ENCODE measurements at regions of chr11 and their contacts with region 1.

Region 1: DNA sequence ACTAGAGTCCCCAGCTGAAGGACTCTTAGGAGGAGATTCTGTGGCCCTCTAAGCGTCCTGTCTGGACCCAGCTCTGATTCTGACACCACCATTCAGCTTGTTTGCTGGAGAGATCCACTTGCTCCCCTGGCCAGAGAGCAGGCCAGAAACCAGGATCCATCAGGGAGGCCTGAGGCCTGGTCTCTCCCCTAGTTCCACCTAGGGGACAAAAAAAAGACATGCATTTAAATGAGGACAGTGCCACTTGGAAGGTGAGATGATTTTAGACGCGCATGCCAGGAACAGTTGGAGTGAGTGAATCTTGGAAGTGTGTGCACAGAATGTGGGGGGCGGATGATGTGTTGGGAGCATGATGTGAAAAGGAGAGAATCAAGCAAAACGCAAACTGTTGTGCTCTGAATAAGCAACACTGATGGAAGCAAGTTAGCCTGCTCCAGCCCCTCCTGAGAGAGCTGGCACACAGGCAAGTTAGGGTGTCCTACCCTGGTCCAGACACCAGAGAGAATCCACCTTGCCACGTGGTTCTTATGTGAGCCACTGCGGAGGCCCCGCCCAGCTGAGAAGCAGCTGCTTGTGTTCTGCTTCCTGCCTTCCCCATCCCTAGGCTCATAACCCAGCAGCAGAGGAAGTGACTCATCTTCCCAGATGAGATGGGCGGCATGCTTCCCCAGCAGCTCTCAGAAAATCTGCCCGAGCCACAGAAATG is 8.0 kb upstream of the SLCO2B1 start:
- DNase-seq: peak; percentile 90
- ATAC-seq: peak; percentile 94
- H3K4me3 Mint-ChIP-seq: no peak overlapping the region
- H3K27ac Mint-ChIP-seq: peak overlapping the region; percentile 81
- H3K4me1 Mint-ChIP-seq: peaks cover 28% of the 10 kb centered on the region
- H3K27me3 Mint-ChIP-seq: no peaks in the 10 kb centered on the region
- CTCF ChIP-seq: peak; percentile 10

Region 2: DNA sequence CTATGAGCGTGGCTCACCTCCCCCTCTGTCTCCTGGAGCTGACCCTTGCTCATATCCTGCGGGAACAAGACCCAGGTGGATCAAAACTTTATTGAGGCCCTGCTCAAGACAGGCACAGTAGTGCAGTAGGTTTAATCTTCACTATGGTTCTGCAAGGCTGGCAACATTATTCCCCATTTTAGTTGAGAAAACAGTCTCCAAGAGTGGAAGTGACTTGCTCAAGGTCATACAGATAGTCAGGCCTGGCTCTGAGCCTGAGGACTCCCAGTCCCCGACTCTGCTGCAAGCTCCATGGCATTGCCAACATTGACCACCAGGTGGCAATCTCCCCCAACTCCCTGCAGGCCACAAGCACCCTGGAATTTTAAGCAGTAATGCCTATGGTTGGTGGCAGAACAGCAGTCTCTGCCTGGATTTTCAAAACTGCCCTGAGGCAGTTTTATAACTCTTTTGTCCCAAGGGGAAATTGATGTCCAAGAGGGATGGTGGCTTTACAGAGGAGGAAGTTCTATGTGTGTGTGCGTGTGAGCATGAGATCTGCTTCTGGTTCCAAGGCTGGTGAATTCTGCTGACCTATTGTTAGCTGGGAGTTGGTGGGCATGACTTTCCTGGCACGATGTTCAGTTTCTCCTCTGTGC is 120.0 kb before region 1 on chr11:
- CTCF ChIA-PET with region 1: interaction called, 41 read pairs
- POLR2A ChIA-PET with region 1: no interaction called
- intact Hi-C with region 1: no loop called
- DNase-seq: peak; percentile 82
- ATAC-seq: peak; percentile 94
- H3K4me3 Mint-ChIP-seq: no peak overlapping the region
- H3K27ac Mint-ChIP-seq: no peak overlapping the region
- H3K4me1 Mint-ChIP-seq: no peaks in the 10 kb centered on the region
- H3K27me3 Mint-ChIP-seq: no peaks in the 10 kb centered on the region
- CTCF ChIP-seq: peak; percentile 98

Region 3: DNA sequence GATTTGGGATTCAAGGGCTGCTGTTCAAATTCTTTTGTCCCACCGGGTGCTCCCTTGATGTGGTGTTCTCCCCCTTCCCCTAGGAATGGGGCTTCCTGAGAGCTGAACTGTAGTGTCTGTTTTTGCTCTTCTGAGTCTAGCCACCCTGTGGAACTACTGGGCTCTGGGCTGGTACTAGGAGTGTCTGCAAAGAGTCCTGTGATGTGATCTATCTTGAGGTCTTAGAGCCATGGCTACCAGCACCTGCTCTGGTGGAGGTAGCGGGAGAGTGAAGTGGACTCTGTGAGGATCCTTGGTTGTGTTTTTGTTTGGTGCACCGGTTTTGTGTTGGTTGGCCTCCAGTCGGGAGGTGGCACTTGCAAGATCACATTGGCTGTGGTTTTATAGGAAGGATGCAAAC is 92.4 kb before region 1 on chr11:
- CTCF ChIA-PET with region 1: no interaction called
- POLR2A ChIA-PET with region 1: no interaction called
- intact Hi-C with region 1: no loop called
- DNase-seq: no peak
- ATAC-seq: no peak
- H3K4me3 Mint-ChIP-seq: no peak overlapping the region
- H3K27ac Mint-ChIP-seq: no peak overlapping the region
- H3K4me1 Mint-ChIP-seq: no peaks in the 10 kb centered on the region
- H3K27me3 Mint-ChIP-seq: peaks cover 7% of the 10 kb centered on the region
- CTCF ChIP-seq: no peak

Region 4: GRCh38 chr11:75182669-75183068 is 39.8 kb after region 1 on chr11:
- CTCF ChIA-PET with region 1: interaction called, 25 read pairs
- POLR2A ChIA-PET with region 1: no interaction called
- intact Hi-C with region 1: no loop called
- DNase-seq: no peak
- ATAC-seq: no peak
- H3K4me3 Mint-ChIP-seq: no peak overlapping the region
- H3K27ac Mint-ChIP-seq: no peak overlapping the region
- H3K4me1 Mint-ChIP-seq: no peaks in the 10 kb centered on the region
- H3K27me3 Mint-ChIP-seq: peaks cover 2% of the 10 kb centered on the region
- CTCF ChIP-seq: no peak

Region 5: DNA sequence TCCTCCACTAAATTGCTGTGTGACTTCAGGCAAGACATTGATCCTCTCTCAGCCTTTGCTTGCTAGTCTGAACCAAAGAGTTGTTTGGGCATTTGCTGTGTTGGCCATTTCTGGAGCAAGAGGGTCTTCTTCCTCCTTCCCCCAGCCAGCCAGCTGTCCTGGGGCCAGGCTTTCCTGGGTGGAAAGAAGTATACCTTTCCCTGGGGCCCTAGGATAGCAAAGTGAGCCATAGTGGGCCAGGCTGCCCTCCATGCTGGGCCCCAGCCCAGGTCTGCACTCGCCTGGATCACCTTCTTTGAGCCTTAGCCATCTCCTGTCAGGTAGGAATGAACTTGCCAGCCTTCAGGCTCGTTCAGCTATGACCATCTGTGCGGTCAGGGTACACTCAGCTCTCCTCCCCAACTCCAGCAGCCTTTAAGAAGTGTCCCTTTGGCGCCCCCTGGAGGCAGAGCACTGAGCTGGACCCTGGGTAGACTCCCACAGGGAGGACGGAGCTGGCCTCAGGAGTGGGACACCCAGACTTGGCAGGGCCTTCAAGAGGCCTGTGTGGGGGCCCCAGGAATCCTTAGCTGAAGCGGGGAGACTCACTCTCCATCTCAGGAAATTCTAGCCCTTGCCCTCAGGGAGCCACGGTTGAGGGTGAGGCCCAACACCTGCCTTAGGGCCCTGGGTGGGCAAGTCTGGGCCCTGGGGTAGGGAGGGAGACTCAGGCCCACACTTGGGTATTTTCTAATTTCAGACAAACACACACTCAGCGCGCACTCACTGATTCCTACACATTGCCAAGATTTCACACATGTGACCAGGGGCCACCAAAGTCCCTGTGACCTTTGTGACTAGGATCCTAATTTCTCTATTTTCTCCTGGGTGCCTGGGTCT is 62.1 kb after region 1 on chr11:
- CTCF ChIA-PET with region 1: interaction called, 557 read pairs
- POLR2A ChIA-PET with region 1: interaction called, 3 read pairs
- intact Hi-C with region 1: loop called (anchors 2 kb)
- DNase-seq: peak; percentile 93
- ATAC-seq: peak; percentile 99
- H3K4me3 Mint-ChIP-seq: no peak overlapping the region
- H3K27ac Mint-ChIP-seq: no peak overlapping the region
- H3K4me1 Mint-ChIP-seq: no peaks in the 10 kb centered on the region
- H3K27me3 Mint-ChIP-seq: peaks cover 1% of the 10 kb centered on the region
- CTCF ChIP-seq: peak; percentile 87

Region 6: GRCh38 chr11:75248690-75249268 is 105.9 kb after region 1 on chr11:
- CTCF ChIA-PET with region 1: interaction called, 663 read pairs
- POLR2A ChIA-PET with region 1: interaction called, 4 read pairs
- intact Hi-C with region 1: loop called (anchors 2 kb)
- DNase-seq: peak; percentile 93
- ATAC-seq: peak; percentile 98
- H3K4me3 Mint-ChIP-seq: no peak overlapping the region
- H3K27ac Mint-ChIP-seq: no peak overlapping the region
- H3K4me1 Mint-ChIP-seq: no peaks in the 10 kb centered on the region
- H3K27me3 Mint-ChIP-seq: peaks cover 3% of the 10 kb centered on the region
- CTCF ChIP-seq: peak; percentile 100

Region 7: DNA sequence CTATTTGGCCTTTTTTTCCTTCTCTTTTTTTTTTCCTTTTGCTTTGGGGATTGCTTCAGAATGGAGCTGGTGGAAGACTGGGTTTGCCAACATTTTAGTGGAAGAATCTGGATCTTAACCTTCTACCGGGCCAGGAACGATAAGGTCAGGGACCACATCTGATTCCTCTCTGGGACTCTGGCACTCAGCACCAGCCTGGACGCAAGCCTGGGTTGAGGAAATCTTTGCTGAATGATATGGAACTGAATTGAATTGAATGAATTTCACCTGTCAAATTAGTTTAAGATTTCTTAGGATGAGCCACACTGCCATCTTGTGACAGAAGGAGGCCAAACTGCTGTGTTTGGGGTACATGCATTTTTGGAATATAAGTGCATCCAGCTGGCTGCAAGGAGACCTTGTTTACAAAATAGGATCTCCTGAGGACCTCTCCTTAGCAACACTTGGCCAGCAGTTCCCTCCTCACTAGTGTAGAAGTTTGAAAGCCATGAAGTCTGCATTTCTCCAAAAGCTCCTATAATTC is 128.1 kb after region 1 on chr11:
- CTCF ChIA-PET with region 1: interaction called, 40 read pairs
- POLR2A ChIA-PET with region 1: interaction called, 3 read pairs
- intact Hi-C with region 1: no loop called
- DNase-seq: peak; percentile 37
- ATAC-seq: no peak
- H3K4me3 Mint-ChIP-seq: no peak overlapping the region
- H3K27ac Mint-ChIP-seq: no peak overlapping the region
- H3K4me1 Mint-ChIP-seq: peaks cover 30% of the 10 kb centered on the region
- H3K27me3 Mint-ChIP-seq: no peaks in the 10 kb centered on the region
- CTCF ChIP-seq: peak; percentile 36